Common myeloid progenitor, CD34-positive (primary cell): ENCODE measurements at regions of chr2 and their contacts with region 1.

Region 1: DNA sequence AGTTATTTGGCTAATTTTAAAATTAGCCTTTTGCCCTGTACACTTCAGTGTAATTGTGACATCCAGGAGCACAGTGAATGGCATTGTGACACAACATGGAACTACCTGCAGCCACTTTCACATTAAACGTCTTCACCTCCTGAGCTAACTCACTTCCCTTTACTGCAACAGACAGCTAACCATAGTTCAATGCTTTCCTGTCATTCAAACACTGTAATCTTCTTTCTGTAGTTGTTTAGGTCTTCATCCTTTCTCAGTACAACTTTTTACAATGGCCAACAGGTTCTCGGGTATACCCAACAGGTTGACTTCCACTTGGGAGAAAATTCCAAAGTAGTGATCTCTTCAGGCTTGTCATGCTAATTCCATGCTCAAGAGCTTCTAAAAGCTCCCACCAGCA is 8.6 kb upstream of the AGPS start:
- DNase-seq: peak in 1 of 3 donors; percentile 42
- H3K4me3 ChIP-seq: no peak overlapping the region
- H3K27ac ChIP-seq: no peak overlapping the region
- H3K4me1 ChIP-seq: peaks cover 0 to 6% (median 4%) of the 10 kb centered on the region in 4 experiments
- H3K27me3 ChIP-seq: no peaks in the 10 kb centered on the region

Region 2: DNA sequence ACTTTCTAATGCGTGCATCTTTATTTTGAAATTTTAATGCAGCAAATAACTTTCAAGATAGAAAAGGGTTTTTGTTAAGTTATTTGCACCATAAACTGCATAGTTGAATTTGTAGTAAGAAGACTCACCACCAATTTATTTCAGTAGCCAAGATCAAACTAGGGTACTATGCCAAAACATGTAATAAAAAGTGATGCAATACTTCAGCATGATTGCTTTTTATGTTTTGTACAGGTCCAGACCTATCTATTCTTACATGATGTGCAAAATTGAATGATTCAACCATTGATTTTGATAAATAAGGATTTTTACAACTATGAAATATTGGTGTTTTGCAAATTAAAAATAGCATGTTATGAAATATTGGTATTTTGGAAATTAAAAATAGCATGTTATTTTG is 35.3 kb after region 1 on chr2:
- CTCF ChIA-PET with region 1: interaction called, 12 read pairs
- POLR2A ChIA-PET with region 1: no interaction called
- DNase-seq: no peak
- H3K4me3 ChIP-seq: no peak overlapping the region
- H3K27ac ChIP-seq: no peak overlapping the region
- H3K4me1 ChIP-seq: peaks cover 0 to 17% (median 9%) of the 10 kb centered on the region in 4 experiments
- H3K27me3 ChIP-seq: no peaks in the 10 kb centered on the region